Dorsolateral prefrontal cortex (tissue), 120 donors: ENCODE measurements at regions of chr7 and their contacts with region 1.

Region 1: GRCh38 chr7:102464577-102465280 is at the starts of genes ALKBH4 and LRWD1:
- DNase-seq: peak; percentile 80 to 95 (median 91)
- H3K4me3 ChIP-seq: peak within 1 kb of the TSS; percentile 51 to 100 (median 98)
- H3K27ac ChIP-seq: peak within 1 kb of the TSS in 54 of 59 donors; percentile 25 to 94 (median 80)
- H3K27me3 ChIP-seq: no peaks in the 10 kb centered on the region
- CTCF ChIP-seq: peak in 55 of 56 donors; percentile 17 to 75 (median 55)
- total RNA-seq, gene ALKBH4: 10.9 to 25.9 (median 16.9) TPM
- total RNA-seq, gene LRWD1: 14.1 to 36.1 (median 21.8) TPM

Region 2: DNA sequence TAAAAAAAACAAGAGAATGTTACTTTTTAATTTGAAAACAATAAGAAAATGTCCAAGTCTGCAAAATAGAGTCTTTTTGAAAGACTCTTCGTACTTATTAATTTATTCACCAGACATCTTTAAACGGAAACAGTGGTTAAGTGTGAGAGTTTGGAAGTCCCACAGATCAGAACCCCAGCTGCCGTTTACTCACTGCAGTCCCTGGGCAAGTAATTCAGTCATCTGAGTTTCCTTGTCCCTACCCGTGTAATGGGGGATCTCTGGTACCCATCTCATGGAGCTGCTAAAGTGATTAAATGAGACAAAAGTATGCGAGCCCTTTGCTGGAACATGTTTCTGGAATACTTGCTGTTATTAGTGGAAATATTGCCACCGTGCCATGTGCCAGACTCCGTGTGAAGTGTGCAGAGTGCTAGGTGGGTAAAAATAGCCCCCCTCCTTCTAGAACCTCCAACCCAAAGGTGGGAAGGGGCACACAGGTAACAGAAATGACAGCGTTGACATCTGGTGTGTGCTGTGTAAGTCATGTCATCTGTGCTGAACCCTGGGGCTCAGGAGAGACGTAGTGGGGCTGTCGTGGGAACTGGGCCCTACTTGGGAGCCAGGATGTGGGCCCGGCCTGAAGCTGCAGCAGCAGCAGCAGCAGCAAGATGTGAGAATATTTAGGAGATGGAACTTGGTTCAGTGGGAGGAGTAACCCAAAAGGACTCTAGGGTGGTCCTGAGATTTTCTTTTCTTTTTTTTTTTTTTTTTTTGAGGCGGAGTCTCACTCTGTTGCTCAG is 506.8 kb before region 1 on chr7:
- intact Hi-C with region 1: no loop called
- DNase-seq: no peak
- H3K4me3 ChIP-seq: no peak overlapping the region
- H3K27ac ChIP-seq: no peak overlapping the region
- H3K27me3 ChIP-seq: no peaks in the 10 kb centered on the region
- CTCF ChIP-seq: no peak

Region 3: DNA sequence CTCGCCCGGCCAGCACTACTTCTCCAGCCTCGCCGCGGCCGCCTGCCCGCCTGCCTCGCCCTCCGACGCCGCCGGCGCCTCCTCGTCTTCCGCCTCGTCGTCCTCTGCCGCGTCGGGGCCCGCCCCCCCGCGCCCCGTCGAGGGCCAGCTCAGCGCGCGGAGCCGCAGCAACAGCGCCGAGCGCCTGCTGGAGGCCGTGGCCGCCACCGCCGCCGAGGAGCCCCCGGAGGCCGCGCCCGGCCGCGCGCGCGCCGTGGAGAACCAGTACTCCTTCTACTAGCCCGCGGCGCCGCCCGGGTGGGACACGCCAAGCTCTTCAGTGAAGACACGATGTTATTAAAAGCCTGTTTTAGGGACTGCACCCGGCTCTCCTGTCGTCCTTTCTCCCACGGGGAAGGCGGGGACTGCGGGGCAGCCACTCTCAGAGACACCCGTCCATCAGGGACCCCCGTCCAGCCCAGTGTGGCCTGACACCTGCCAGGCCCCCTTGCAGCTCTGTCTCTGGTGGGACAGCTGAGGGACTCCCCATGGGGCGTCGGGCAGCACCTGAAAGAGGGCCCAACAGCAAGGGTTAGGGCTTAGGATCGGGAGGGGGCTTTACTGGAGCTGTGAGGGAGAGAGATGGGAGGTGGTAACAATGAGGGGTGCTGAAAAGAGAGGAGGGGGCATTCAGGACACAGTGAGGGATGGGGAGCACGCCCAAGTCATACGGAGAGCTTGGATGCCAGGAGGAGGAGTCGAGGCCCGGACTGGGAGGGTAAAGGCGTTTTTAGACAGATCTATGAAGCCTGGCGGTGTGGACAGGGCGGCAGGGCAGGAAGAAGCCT is 143.2 kb before region 1 on chr7:
- intact Hi-C with region 1: no loop called
- DNase-seq: no peak
- H3K4me3 ChIP-seq: no peak overlapping the region
- H3K27ac ChIP-seq: no peak overlapping the region
- H3K27me3 ChIP-seq: peaks cover 0 to 6% (median 0%) of the 10 kb centered on the region in 45 donors
- CTCF ChIP-seq: no peak

Region 4: GRCh38 chr7:102396027-102397019 is 68.4 kb before region 1 on chr7 and contains the start of gene PRKRIP1:
- intact Hi-C with region 1: loop called (anchors 2 to 5 kb)
- DNase-seq: peak; percentile 69 to 93 (median 88)
- H3K4me3 ChIP-seq: peak within 1 kb of the TSS; percentile 57 to 100 (median 93)
- H3K27ac ChIP-seq: peak within 1 kb of the TSS; percentile 62 to 96 (median 90)
- H3K27me3 ChIP-seq: no peaks in the 10 kb centered on the region
- CTCF ChIP-seq: peak in 25 of 56 donors; percentile 6 to 56 (median 25)
- total RNA-seq, gene PRKRIP1: 18.7 to 51.2 (median 29.6) TPM

Region 5: GRCh38 chr7:102433219-102434038 is 31.3 kb before region 1 on chr7 and contains the start of gene ORAI2:
- intact Hi-C with region 1: loop called in 1 of 2 experiments (anchors 5 kb)
- DNase-seq: peak; percentile 65 to 91 (median 82)
- H3K4me3 ChIP-seq: peak within 1 kb of the TSS; percentile 57 to 94 (median 82)
- H3K27ac ChIP-seq: peak within 1 kb of the TSS in 55 of 59 donors; percentile 52 to 92 (median 84)
- H3K27me3 ChIP-seq: no peaks in the 10 kb centered on the region
- CTCF ChIP-seq: peak in 1 of 56 donors; percentile 4
- total RNA-seq, gene ORAI2: 18.2 to 90.7 (median 42.4) TPM